PC-9 (cell line): ENCODE measurements at regions of chr17 and their contacts with region 1.

Region 1: DNA sequence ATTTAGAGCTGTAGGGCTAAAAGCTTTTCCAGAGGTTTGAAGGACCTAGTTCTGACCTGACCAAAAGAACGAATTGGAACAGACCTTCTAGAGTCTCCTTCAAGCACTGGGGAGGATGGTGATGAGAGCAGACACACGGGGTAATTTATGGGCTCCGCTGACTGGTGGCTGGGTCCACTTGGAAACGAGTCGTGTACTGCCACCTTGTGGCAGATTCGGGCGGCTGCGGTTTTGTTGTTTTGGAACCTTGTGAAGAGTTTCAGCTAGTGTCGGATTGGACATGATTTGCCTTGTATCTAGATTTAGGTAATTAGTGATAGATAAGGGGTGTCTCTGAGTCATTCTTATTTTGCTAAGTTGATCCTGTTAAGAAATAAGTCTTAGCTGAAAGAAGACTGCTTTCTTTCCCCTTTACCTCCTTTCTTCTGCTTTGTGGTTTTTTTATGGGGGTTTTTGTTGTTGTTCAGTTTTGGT is 98.9 kb downstream of the AATF start:
- DNase-seq: peak; percentile 56 to 57
- H3K4me3 ChIP-seq: no peak overlapping the region
- H3K27ac ChIP-seq: no peak overlapping the region
- H3K4me1 ChIP-seq: no peaks in the 10 kb centered on the region
- H3K27me3 ChIP-seq: no peaks in the 10 kb centered on the region
- CTCF ChIP-seq: peak; percentile 89

Region 2: GRCh38 chr17:36665417-36665816 is 382.3 kb before region 1 on chr17:
- CTCF ChIA-PET with region 1: interaction called, 10 read pairs
- POLR2A ChIA-PET with region 1: no interaction called
- intact Hi-C with region 1: no loop called
- DNase-seq: peak; percentile 27 to 51
- H3K4me3 ChIP-seq: no peak overlapping the region
- H3K27ac ChIP-seq: no peak overlapping the region
- H3K4me1 ChIP-seq: 0 out of 2 replicates have a peak, but pooled peaks cover 8% of the 10 kb centered on the region
- H3K27me3 ChIP-seq: no peaks in the 10 kb centered on the region
- CTCF ChIP-seq: no peak

Region 3: GRCh38 chr17:36705874-36706731 is 341.6 kb before region 1 on chr17:
- CTCF ChIA-PET with region 1: no interaction called
- POLR2A ChIA-PET with region 1: no interaction called
- intact Hi-C with region 1: loop called (anchors 1 kb)
- DNase-seq: peak in 1 of 2 experiments; percentile 44
- H3K4me3 ChIP-seq: no peak overlapping the region
- H3K27ac ChIP-seq: no peak overlapping the region
- H3K4me1 ChIP-seq: 0 out of 2 replicates have a peak, but pooled peaks cover 5% of the 10 kb centered on the region
- H3K27me3 ChIP-seq: peaks cover 11% of the 10 kb centered on the region
- CTCF ChIP-seq: peak; percentile 79

Region 4: DNA sequence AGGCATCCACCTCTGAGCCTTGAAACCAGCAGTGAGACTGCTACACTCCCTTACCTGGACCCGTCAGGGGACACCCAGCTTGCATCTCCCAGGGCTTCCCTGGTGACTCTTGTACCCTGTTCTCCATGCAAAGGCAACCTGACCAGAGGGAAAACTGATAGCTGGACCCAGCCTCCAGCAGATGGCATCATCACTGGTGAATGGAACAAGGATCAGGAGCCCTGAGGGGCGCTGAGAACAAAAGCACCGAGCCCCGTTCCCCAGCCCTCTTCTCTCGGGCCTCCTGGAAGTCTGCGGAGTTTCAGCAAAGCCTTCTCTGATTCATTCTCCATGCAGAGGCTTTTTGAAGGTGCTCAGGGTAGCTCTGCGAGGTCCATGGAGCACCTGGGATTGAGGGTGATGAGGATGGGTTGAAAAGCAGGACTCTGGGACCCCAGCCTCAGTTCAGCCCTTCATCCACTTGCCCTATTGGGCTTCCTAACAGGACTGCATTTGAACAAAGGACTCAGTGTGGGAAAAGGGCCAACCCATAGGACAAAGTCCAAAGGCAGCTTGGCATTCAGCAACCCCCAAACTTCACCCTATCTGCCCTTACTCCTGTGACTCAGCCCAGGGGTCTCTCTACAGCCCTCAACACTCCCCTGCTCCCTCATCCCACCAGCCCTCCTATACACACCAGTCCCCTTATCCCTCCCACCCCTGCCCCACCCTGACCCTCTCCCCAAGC is 155.4 kb before region 1 on chr17:
- CTCF ChIA-PET with region 1: interaction called, 10 read pairs
- POLR2A ChIA-PET with region 1: no interaction called
- intact Hi-C with region 1: no loop called
- DNase-seq: no peak
- H3K4me3 ChIP-seq: no peak overlapping the region
- H3K27ac ChIP-seq: no peak overlapping the region
- H3K4me1 ChIP-seq: no peaks in the 10 kb centered on the region
- H3K27me3 ChIP-seq: no peaks in the 10 kb centered on the region
- CTCF ChIP-seq: no peak

Region 5: GRCh38 chr17:37031493-37032083 is 16.1 kb before region 1 on chr17:
- CTCF ChIA-PET with region 1: no interaction called
- POLR2A ChIA-PET with region 1: no interaction called
- intact Hi-C with region 1: no loop called
- DNase-seq: no peak
- H3K4me3 ChIP-seq: no peak overlapping the region
- H3K27ac ChIP-seq: no peak overlapping the region
- H3K4me1 ChIP-seq: no peaks in the 10 kb centered on the region
- H3K27me3 ChIP-seq: no peaks in the 10 kb centered on the region
- CTCF ChIP-seq: no peak

Region 6: DNA sequence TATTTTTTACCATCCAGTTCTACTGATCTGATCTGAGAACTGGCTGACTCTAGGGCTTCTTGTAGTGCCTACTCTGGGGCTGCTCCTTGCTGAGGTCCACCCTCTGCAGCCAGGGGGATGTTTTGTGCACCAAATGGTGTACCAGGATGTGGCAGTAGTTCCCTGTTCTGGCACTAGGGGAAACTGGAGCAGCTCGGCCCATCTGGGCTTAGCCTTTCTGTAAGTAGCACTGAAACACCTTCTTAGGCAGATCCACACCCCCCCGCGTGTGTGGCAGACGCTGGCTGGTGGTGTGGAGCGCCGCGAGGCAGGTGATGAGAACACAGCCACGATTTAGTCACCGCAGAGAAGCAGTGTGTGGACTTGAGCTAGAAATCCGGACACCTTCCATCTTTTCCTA is 459.0 kb after region 1 on chr17:
- CTCF ChIA-PET with region 1: no interaction called
- POLR2A ChIA-PET with region 1: no interaction called
- intact Hi-C with region 1: no loop called
- DNase-seq: peak in 1 of 2 experiments; percentile 3
- H3K4me3 ChIP-seq: no peak overlapping the region
- H3K27ac ChIP-seq: no peak overlapping the region
- H3K4me1 ChIP-seq: no peaks in the 10 kb centered on the region
- H3K27me3 ChIP-seq: no peaks in the 10 kb centered on the region
- CTCF ChIP-seq: peak; percentile 53